ENCODE measurements at regions of chr4 and their contacts with region 1.

Region 1: DNA sequence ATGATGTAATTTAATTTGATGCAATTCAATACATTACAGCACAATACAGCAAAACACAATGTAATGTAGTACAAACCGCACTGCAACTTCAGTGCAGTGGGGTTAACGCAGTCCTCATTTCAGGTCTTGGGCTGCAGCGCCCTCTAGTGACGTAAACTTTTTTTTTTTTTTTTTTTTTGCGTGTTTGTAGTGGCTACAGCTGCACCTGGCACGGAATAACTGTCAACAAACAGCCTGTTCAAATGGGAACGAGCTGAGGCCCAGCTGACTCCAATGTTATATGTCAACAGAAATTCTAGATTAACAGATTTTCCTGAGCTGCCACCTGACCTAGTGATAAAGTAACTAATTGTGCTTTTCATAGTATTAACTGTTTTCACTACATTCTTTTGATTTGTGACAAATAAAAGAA is 33.5 kb upstream of the RASSF6 start:
- DNase-seq: no peak

Region 2: DNA sequence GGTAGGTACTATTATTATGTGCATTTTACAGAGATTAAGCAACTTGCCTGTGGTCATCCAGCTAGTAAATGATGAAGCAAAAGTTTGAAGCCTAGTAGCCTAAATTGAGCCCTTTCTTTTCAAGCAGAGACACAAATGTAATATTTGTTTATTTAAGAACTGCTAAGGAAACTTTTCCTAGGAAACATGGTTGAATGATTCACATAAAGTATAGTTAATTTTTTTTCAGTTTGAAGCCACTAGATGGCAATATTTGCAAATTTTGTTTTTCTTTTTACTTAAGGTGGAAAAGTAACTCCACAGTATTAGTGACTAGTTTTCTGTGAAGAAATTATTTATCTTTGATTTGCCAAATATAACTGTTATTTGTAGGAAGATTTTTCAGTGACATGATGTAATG is 342.3 kb before region 1 on chr4:
- intact Hi-C with region 1: loop called (anchors 10 kb)
- DNase-seq: no peak

Region 3: DNA sequence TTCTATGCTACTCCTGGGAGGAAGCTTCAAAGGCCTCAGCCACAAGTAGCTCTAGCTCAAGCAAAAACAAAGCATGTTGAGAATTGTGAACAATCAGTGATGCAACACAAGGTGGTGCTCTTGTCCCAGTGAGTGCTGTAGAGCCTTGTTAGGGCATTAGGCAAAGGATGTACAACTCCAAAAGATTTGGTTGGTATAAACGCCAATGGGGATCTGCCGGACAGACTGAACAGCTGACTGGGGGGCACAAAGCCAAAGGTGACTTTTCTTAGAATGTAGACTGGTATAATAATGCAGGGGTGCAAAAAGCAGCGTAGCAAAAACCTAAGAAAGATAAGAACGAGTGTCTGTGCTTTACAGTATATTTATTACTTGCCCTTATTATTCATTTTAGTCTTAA is 312.2 kb before region 1 on chr4:
- intact Hi-C with region 1: loop called (anchors 10 kb)
- DNase-seq: no peak

Measured in cardiac septum (tissue), 1 donor.